Activated naive CD4-positive, alpha-beta T cell treated with anti-CD3 and anti-CD28 coated beads, Interleukin-2, amount 10 ng/mL, durations not matched to agents 7 days and 5 days (primary cell): ENCODE measurements at regions of chr1 and their contacts with region 1.

Region 1: GRCh38 chr1:116724765-116725375 is 29.4 kb upstream of the CD2 start:
- DNase-seq: peak; percentile 86
- H3K4me3 Mint-ChIP-seq: no peak overlapping the region
- H3K27ac Mint-ChIP-seq: no peak overlapping the region
- H3K4me1 Mint-ChIP-seq: peaks cover 19% of the 10 kb centered on the region
- H3K27me3 Mint-ChIP-seq: peaks cover 4% of the 10 kb centered on the region

Region 2: GRCh38 chr1:116769561-116769977 is 44.7 kb after region 1 on chr1:
- CTCF ChIA-PET with region 1: interaction called, 11 read pairs
- DNase-seq: peak; percentile 85
- H3K4me3 Mint-ChIP-seq: peak overlapping the region; percentile 59
- H3K27ac Mint-ChIP-seq: peak overlapping the region; percentile 99
- H3K4me1 Mint-ChIP-seq: peaks cover 88% of the 10 kb centered on the region
- H3K27me3 Mint-ChIP-seq: no peaks in the 10 kb centered on the region

Region 3: DNA sequence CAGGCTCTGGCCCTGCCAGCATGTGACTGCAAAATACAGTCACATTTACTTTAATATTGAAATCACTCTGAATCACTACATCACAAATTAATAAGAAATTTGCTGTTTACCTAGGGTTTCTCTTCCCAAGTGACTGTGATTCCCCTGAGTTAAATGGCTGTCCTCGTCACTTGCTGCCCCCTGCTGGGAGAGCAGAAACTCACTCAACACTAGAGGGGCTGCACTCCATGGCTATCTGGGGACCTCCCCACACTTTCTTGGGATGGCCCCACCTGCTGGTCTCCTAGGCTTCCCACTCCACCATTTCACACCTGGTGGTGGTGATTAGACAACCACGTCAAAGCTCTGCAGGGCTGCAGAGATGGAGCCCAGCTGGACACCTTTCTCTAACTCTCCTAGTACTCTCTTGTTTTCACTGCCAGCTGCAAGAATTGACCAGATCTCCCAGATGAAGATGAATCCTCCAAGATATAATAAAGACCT is 92.8 kb after region 1 on chr1:
- CTCF ChIA-PET with region 1: interaction called, 28 read pairs
- DNase-seq: peak; percentile 84
- H3K4me3 Mint-ChIP-seq: peak overlapping the region; percentile 25
- H3K27ac Mint-ChIP-seq: peak overlapping the region; percentile 85
- H3K4me1 Mint-ChIP-seq: peaks cover 50% of the 10 kb centered on the region
- H3K27me3 Mint-ChIP-seq: no peaks in the 10 kb centered on the region

Region 4: DNA sequence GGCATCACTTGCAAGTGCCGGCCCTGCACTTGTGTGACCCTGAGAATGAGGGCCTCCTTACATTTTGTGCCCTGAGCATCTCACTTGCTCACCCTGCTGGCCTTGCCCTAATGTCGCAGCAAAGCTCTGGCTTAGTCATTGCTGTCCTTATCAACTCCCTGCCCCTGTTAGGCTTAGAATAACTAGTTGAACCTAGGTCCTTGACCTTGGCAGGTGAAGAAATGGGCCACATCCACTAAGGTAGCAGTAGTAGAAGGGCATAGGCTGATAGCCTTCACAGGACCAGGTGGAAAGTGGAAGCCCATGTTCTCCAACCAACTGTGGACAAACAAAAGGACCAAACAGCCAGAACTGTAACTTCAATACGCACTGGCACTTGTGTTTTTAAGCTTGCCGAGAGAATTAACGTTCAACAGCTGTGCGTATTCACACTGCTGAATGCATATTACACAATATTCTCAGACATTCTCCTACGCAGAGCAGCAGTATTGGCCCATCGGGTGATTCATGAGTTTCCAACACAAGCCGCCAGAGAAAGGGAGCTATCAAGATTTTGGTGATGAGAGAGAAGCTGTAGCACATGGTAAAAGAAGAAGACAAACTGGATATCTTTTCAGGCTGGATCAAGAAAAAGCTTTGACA is 157.1 kb after region 1 on chr1:
- CTCF ChIA-PET with region 1: interaction called, 31 read pairs
- DNase-seq: peak; percentile 50
- H3K4me3 Mint-ChIP-seq: no peak overlapping the region
- H3K27ac Mint-ChIP-seq: no peak overlapping the region
- H3K4me1 Mint-ChIP-seq: peaks cover 4% of the 10 kb centered on the region
- H3K27me3 Mint-ChIP-seq: no peaks in the 10 kb centered on the region

Region 5: DNA sequence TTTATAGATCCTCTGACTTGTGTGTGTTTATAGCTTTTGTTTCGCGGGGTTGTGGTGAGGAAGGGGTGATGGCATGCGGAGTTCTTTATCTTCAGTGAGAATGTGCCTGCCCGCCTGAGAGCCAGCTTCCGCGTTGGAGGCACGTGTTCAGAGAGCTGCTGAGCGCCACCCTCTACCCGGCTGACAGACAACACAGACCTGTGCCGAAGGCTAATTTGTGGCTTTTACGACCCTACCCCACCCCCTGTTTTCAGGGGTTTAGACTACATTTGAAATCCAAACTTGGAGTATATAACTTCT is 262.3 kb after region 1 on chr1:
- CTCF ChIA-PET with region 1: interaction called, 13 read pairs
- DNase-seq: peak; percentile 83
- H3K4me3 Mint-ChIP-seq: peak overlapping the region; percentile 64
- H3K27ac Mint-ChIP-seq: peak overlapping the region; percentile 88
- H3K4me1 Mint-ChIP-seq: peaks cover 54% of the 10 kb centered on the region
- H3K27me3 Mint-ChIP-seq: no peaks in the 10 kb centered on the region

Region 6: GRCh38 chr1:117059678-117060440 is 335.0 kb after region 1 on chr1 and contains the start of gene TTF2:
- CTCF ChIA-PET with region 1: interaction called, 21 read pairs
- DNase-seq: peak; percentile 97
- H3K4me3 Mint-ChIP-seq: no peak within 1 kb of the TSS
- H3K27ac Mint-ChIP-seq: no peak within 1 kb of the TSS
- H3K4me1 Mint-ChIP-seq: peaks cover 62% of the 10 kb centered on the region
- H3K27me3 Mint-ChIP-seq: no peaks in the 10 kb centered on the region